Common myeloid progenitor, CD34-positive (primary cell): ENCODE measurements at regions of chr6 and their contacts with region 1.

Region 1: GRCh38 chr6:41318654-41319565 is 16.5 kb upstream of the NCR2 start:
- DNase-seq: peak; percentile 79 to 87 (median 86)
- H3K4me3 ChIP-seq: peak overlapping the region; percentile 6 to 83 (median 63)
- H3K27ac ChIP-seq: no peak overlapping the region
- H3K4me1 ChIP-seq: peaks cover 5 to 21% (median 16%) of the 10 kb centered on the region in 4 experiments
- H3K27me3 ChIP-seq: peaks cover 0 to 12% (median 4%) of the 10 kb centered on the region in 5 experiments

Region 2: GRCh38 chr6:41092421-41093140 is 226.3 kb before region 1 on chr6:
- CTCF ChIA-PET with region 1: interaction called, 22 read pairs
- POLR2A ChIA-PET with region 1: no interaction called
- DNase-seq: peak; percentile 34 to 65 (median 59)
- H3K4me3 ChIP-seq: no peak overlapping the region
- H3K27ac ChIP-seq: no peak overlapping the region
- H3K4me1 ChIP-seq: no peaks in the 10 kb centered on the region
- H3K27me3 ChIP-seq: no peaks in the 10 kb centered on the region

Region 3: GRCh38 chr6:41278699-41279405 is 40.1 kb before region 1 on chr6:
- CTCF ChIA-PET with region 1: interaction called, 16 read pairs
- POLR2A ChIA-PET with region 1: no interaction called
- DNase-seq: peak; percentile 94 to 97 (median 96)
- H3K4me3 ChIP-seq: peak overlapping the region in 2 of 7 experiments; percentile 25 to 67
- H3K27ac ChIP-seq: no peak overlapping the region
- H3K4me1 ChIP-seq: peaks cover 6 to 17% (median 10%) of the 10 kb centered on the region in 4 experiments
- H3K27me3 ChIP-seq: no peaks in the 10 kb centered on the region

Region 4: DNA sequence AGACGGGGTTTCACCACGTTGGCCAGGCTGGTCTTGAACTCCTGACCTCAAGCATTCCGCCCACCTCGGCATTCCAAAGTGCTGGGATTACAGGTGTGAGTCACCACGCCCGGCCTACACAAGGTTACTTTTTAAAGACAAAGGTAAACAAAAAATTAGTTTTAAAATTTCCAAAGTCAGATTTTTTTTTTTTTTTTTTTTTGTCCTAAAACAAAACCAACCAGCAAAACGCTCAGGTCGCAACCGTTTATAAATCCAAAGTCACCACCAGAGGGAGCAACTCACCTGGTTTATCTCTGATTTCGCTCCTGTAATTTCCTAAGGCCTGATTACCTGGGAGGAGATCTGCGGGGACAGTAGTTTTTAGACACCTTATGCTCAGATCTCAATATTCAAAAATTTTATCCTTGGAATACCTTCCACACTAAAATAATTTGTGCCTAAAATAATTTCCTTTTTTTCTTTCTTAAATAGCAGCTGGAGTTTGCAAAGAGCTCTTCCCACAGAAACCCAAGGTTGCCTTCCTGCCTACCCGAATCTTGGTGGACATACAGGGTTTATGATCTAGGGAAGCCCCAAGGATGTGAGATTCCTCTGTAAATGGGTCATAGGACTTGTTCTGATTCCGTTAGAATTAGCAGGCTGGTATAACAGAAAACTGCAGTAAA is 12.6 kb before region 1 on chr6:
- CTCF ChIA-PET with region 1: interaction called, 41 read pairs
- POLR2A ChIA-PET with region 1: no interaction called
- DNase-seq: peak; percentile 62 to 72 (median 63)
- H3K4me3 ChIP-seq: no peak overlapping the region
- H3K27ac ChIP-seq: no peak overlapping the region
- H3K4me1 ChIP-seq: no peaks in the 10 kb centered on the region
- H3K27me3 ChIP-seq: no peaks in the 10 kb centered on the region

Region 5: DNA sequence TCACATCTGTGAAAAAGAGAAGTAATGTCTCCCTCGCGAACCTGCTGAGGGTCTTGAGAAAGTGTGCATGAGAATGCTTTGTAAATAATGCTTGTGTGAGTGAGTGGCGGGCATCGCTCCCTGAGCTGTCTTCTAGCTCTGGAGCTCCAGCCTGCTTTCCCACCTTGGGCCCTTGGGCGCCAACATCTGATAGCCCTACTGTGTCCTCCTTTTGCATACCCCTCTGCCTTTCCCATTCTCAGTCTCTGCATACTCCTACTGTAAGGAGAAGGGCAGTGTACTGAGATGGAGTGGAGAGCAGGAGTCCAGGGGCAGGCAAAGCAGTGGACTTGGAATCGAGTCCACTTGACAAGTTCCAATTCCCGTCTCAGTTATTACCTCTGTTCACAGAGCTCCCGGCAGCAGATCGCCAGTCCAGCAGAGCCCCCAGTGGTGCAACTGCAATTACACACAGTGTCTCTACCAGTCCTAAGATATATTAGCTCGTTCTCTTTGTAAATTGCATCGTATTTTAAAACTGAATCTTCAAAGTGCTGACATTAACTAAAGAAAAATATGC is 15.7 kb after region 1 on chr6:
- CTCF ChIA-PET with region 1: interaction called, 70 read pairs
- POLR2A ChIA-PET with region 1: interaction called, 4 read pairs
- DNase-seq: peak; percentile 8 to 30 (median 25)
- H3K4me3 ChIP-seq: no peak overlapping the region
- H3K27ac ChIP-seq: no peak overlapping the region
- H3K4me1 ChIP-seq: peaks cover 0 to 56% (median 22%) of the 10 kb centered on the region in 4 experiments
- H3K27me3 ChIP-seq: no peaks in the 10 kb centered on the region

Region 6: DNA sequence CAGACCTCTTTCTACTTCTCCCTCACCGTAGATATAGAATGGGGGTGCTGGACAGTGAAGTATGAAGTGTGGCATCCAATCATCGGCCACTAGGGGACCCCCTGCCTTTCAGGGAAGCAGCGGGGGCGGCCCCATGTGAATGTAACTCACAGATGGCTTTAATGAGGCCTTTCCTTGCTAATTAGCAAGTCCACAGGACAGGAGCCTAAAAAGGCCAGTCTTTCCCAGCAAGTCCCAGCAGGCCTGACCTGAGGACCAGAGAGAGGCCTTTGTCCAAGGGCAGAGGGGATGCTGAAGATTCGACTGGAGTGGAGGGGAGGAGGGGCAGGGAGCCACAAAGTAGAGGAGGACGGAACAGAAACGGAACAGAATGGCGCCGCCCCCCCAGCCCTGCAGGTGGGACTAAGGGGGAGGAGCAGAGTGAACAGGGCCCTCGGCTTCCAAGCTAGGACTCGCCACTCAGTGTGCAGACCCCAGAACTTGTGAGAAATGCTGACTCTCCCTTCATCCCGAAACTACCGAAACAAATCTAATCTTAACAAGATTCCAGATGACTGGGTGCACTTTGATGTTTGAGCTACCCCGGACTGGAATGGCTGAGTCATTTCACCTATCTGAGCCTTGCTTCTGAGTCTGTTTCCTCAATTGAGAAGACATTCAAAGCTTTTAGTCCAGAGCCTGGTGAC is 817.7 kb after region 1 on chr6:
- CTCF ChIA-PET with region 1: no interaction called
- POLR2A ChIA-PET with region 1: no interaction called
- DNase-seq: peak; percentile 79 to 93 (median 91)
- H3K4me3 ChIP-seq: peak overlapping the region in 6 of 7 experiments; percentile 19 to 71 (median 36)
- H3K27ac ChIP-seq: peak overlapping the region in 1 of 2 experiments; percentile 62
- H3K4me1 ChIP-seq: peaks cover 0 to 27% (median 21%) of the 10 kb centered on the region in 4 experiments
- H3K27me3 ChIP-seq: peaks cover 0 to 6% (median 1%) of the 10 kb centered on the region in 5 experiments